ENCODE measurements at regions of chr10 and their contacts with region 1.

Region 1: GRCh38 chr10:73879296-73880173 is 5.2 kb upstream of the CAMK2G start:
- DNase-seq: peak; percentile 98
- ATAC-seq: peak; percentile 89
- H3K4me3 Mint-ChIP-seq: no peak overlapping the region
- H3K27ac Mint-ChIP-seq: peak overlapping the region; percentile 43
- H3K4me1 Mint-ChIP-seq: peaks cover 39% of the 10 kb centered on the region
- H3K27me3 Mint-ChIP-seq: no peaks in the 10 kb centered on the region
- CTCF ChIP-seq: peak; percentile 89

Region 2: GRCh38 chr10:73785221-73785720 is 94.3 kb before region 1 on chr10 and contains the start of gene ZSWIM8:
- CTCF ChIA-PET with region 1: interaction called, 10 read pairs
- POLR2A ChIA-PET with region 1: interaction called, 4 read pairs
- intact Hi-C with region 1: no loop called
- DNase-seq: peak; percentile 93
- ATAC-seq: peak; percentile 88
- H3K4me3 Mint-ChIP-seq: peak within 1 kb of the TSS; percentile 84
- H3K27ac Mint-ChIP-seq: peak within 1 kb of the TSS; percentile 100
- H3K4me1 Mint-ChIP-seq: peaks cover 37% of the 10 kb centered on the region
- H3K27me3 Mint-ChIP-seq: no peaks in the 10 kb centered on the region
- CTCF ChIP-seq: no peak
- total RNA-seq, gene ZSWIM8: 30.0 to 41.0 TPM

Region 3: GRCh38 chr10:73848821-73849489 is 30.6 kb before region 1 on chr10:
- CTCF ChIA-PET with region 1: interaction called, 430 read pairs
- POLR2A ChIA-PET with region 1: interaction called, 22 read pairs
- intact Hi-C with region 1: loop called (anchors 1 kb)
- DNase-seq: peak; percentile 97
- ATAC-seq: peak; percentile 100
- H3K4me3 Mint-ChIP-seq: no peak overlapping the region
- H3K27ac Mint-ChIP-seq: peak overlapping the region; percentile 76
- H3K4me1 Mint-ChIP-seq: peaks cover 12% of the 10 kb centered on the region
- H3K27me3 Mint-ChIP-seq: no peaks in the 10 kb centered on the region
- CTCF ChIP-seq: peak; percentile 94

Region 4: GRCh38 chr10:73926152-73926764 is 46.7 kb after region 1 on chr10:
- CTCF ChIA-PET with region 1: interaction called, 14 read pairs
- POLR2A ChIA-PET with region 1: no interaction called
- intact Hi-C with region 1: no loop called
- DNase-seq: no peak
- ATAC-seq: no peak
- H3K4me3 Mint-ChIP-seq: no peak overlapping the region
- H3K27ac Mint-ChIP-seq: no peak overlapping the region
- H3K4me1 Mint-ChIP-seq: peaks cover 15% of the 10 kb centered on the region
- H3K27me3 Mint-ChIP-seq: peaks cover 57% of the 10 kb centered on the region
- CTCF ChIP-seq: no peak

Region 5: GRCh38 chr10:73946253-73947155 is 67.0 kb after region 1 on chr10:
- CTCF ChIA-PET with region 1: interaction called, 126 read pairs
- POLR2A ChIA-PET with region 1: interaction called, 5 read pairs
- intact Hi-C with region 1: no loop called
- DNase-seq: no peak
- ATAC-seq: no peak
- H3K4me3 Mint-ChIP-seq: no peak overlapping the region
- H3K27ac Mint-ChIP-seq: no peak overlapping the region
- H3K4me1 Mint-ChIP-seq: no peaks in the 10 kb centered on the region
- H3K27me3 Mint-ChIP-seq: peaks cover 3% of the 10 kb centered on the region
- CTCF ChIP-seq: no peak

Measured in activated CD8-positive, alpha-beta T cell treated with anti-CD3 and anti-CD28 coated beads for 36 hours (primary cell).